Activated naive CD4-positive, alpha-beta T cell treated with anti-CD3 and anti-CD28 coated beads, Interleukin-2, amount 10 ng/mL, durations not matched to agents 7 days and 5 days (primary cell): ENCODE measurements at regions of chr10 and their contacts with region 1.

Region 1: DNA sequence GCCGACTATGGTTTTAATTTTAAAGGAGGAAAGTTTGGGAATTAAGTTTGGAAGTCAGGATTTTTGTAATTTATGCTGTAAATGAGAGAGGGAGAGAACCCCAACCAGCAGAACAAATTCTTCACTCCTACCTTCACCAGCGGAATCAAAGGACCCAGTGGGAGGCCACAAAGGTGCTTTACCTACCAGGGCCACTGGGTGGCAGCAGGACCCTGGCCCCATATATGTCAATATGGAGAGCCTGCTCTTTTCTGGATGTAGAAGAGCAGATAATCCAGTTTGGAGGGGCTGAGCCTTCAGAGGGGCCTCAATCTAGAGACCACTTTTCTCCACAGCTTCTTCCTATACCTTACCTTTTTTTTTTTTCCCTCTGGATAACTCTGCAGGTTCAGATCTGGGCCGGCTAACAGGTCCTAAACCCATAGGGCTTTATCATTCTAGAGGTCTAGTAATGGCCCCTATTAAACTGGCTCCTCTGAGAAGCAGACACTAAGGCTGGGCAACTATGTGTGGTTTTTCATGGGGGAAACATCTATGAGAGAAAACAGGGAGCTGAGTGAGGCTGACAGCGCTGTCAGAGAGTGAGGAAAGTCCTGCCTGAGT is 8.5 kb upstream of the SCD start:
- DNase-seq: peak; percentile 89
- H3K4me3 Mint-ChIP-seq: no peak overlapping the region
- H3K27ac Mint-ChIP-seq: peak overlapping the region; percentile 71
- H3K4me1 Mint-ChIP-seq: peaks cover 22% of the 10 kb centered on the region
- H3K27me3 Mint-ChIP-seq: peaks cover 38% of the 10 kb centered on the region

Region 2: DNA sequence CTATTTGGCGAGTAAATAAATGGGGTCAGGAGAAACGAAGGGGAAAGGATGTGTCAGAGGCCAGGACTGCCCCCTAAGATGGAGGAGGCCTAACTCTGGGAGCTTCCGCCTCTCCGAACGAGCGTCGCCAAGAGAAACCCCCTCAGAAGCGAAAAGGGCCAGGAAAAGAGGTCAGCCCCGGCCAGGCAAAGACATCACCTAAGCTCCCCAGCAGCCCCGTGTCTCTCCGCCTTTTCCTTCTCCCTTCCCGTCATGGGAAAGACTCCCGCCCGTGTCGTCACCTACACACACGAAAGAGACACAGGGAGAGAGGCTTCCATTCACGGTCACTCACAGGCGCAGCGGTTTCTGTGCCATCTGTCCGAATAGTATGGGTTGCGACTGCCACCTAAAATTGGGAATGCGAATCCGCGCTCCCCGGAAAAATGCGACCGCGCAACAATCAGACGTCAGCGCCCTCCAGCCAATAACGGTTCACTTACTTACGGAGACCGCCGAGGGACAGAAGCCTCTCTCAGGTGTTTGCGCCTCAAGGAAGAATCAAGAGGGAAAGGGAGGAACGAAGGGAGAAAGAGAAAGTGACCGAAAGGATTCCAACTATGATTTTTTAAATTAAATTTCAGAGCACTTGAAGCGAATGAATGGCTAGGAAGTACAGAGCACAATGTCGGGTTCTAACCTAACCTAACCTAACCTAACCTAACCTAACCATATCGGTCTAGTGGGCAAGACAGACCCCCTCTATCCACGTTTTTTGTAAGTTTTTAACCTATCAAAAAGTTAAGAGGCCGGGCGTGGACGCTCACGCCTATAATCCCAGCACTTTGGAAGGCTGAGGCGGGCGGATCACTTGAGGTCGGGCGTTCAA is 71.1 kb before region 1 on chr10 and contains the start of gene CWF19L1:
- CTCF ChIA-PET with region 1: no interaction called
- DNase-seq: peak; percentile 86
- H3K4me3 Mint-ChIP-seq: peak within 1 kb of the TSS; percentile 100
- H3K27ac Mint-ChIP-seq: peak within 1 kb of the TSS; percentile 98
- H3K4me1 Mint-ChIP-seq: peaks cover 29% of the 10 kb centered on the region
- H3K27me3 Mint-ChIP-seq: no peaks in the 10 kb centered on the region

Region 3: GRCh38 chr10:100303724-100304319 is 34.7 kb before region 1 on chr10:
- CTCF ChIA-PET with region 1: interaction called, 16 read pairs
- DNase-seq: no peak
- H3K4me3 Mint-ChIP-seq: no peak overlapping the region
- H3K27ac Mint-ChIP-seq: no peak overlapping the region
- H3K4me1 Mint-ChIP-seq: no peaks in the 10 kb centered on the region
- H3K27me3 Mint-ChIP-seq: peaks cover 69% of the 10 kb centered on the region

Region 4: DNA sequence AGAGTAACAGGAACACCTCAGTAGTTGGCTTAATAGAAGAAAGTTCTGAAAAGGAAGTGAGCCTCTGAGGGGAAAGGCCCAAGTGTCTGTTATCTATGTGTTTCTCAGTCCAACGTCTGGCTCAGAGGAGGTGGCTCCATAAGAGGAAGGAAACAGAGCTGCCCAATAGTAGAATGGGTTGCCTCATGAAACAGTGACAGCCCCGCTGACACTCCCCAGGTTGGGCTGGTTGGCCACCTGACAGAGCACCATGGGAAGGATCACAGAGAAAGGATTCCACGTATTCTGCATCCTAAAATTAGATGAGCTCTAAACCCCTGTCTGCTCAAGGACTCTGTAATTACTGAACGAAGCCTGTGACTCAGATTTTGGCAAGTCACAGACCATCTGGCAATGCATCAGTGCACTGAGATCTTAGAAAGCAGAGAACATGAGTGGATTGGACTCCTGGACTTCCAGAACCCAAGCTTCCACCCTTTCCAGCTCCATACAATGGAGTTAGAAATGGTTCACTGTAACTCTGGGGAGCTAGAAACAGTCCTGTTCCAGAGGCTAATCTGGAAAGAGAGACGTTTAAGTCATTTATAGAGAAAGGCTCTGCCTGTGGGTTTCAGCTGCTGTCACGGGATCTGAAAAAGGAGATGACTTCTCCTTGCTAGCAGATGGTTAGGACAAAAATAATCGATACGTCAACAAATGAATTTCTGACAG is 11.4 kb before region 1 on chr10:
- CTCF ChIA-PET with region 1: interaction called, 14 read pairs
- DNase-seq: peak; percentile 57
- H3K4me3 Mint-ChIP-seq: no peak overlapping the region
- H3K27ac Mint-ChIP-seq: peak overlapping the region; percentile 7
- H3K4me1 Mint-ChIP-seq: peaks cover 19% of the 10 kb centered on the region
- H3K27me3 Mint-ChIP-seq: peaks cover 30% of the 10 kb centered on the region